ENCODE measurements at regions of chr4 and their contacts with region 1.

Region 1: DNA sequence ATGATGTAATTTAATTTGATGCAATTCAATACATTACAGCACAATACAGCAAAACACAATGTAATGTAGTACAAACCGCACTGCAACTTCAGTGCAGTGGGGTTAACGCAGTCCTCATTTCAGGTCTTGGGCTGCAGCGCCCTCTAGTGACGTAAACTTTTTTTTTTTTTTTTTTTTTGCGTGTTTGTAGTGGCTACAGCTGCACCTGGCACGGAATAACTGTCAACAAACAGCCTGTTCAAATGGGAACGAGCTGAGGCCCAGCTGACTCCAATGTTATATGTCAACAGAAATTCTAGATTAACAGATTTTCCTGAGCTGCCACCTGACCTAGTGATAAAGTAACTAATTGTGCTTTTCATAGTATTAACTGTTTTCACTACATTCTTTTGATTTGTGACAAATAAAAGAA is 33.5 kb upstream of the RASSF6 start:
- DNase-seq: peak; percentile 43
- ATAC-seq: peak; percentile 91
- H3K4me3 ChIP-seq: no peak overlapping the region
- H3K27ac ChIP-seq: no peak overlapping the region
- H3K4me1 ChIP-seq: no peaks in the 10 kb centered on the region
- H3K27me3 ChIP-seq: no peaks in the 10 kb centered on the region
- CTCF ChIP-seq: peak; percentile 45 to 62 (median 45); a peak in 4 of 6 replicates
- EP300 ChIP-seq: peak in 1 of 2 experiments; percentile 58; a peak in 1 of 4 replicates
- POLR2A ChIP-seq: no peak
- RAD21 ChIP-seq: peak; percentile 90

Region 2: DNA sequence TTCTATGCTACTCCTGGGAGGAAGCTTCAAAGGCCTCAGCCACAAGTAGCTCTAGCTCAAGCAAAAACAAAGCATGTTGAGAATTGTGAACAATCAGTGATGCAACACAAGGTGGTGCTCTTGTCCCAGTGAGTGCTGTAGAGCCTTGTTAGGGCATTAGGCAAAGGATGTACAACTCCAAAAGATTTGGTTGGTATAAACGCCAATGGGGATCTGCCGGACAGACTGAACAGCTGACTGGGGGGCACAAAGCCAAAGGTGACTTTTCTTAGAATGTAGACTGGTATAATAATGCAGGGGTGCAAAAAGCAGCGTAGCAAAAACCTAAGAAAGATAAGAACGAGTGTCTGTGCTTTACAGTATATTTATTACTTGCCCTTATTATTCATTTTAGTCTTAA is 312.2 kb before region 1 on chr4:
- CTCF ChIA-PET with region 1: interaction called, 44 read pairs
- POLR2A ChIA-PET with region 1: no interaction called
- RAD21 ChIA-PET with region 1: interaction called, 10 read pairs
- SMC1A ChIA-PET with region 1: interaction called, 31 read pairs
- in situ Hi-C with region 1: loop called (anchors 5 kb)
- intact Hi-C with region 1: loop called (anchors 1 kb)
- DNase-seq: peak; percentile 16
- ATAC-seq: peak; percentile 90
- H3K4me3 ChIP-seq: no peak overlapping the region
- H3K27ac ChIP-seq: no peak overlapping the region
- H3K4me1 ChIP-seq: no peaks in the 10 kb centered on the region
- H3K27me3 ChIP-seq: no peaks in the 10 kb centered on the region
- CTCF ChIP-seq: peak; percentile 44 to 71 (median 57); a peak in 4 of 6 replicates
- EP300 ChIP-seq: no peak
- POLR2A ChIP-seq: no peak
- RAD21 ChIP-seq: peak; percentile 82

Region 3: GRCh38 chr4:73583666-73584065 is 70.0 kb before region 1 on chr4:
- CTCF ChIA-PET with region 1: interaction called, 40 read pairs
- POLR2A ChIA-PET with region 1: interaction called, 4 read pairs
- RAD21 ChIA-PET with region 1: interaction called, 30 read pairs
- SMC1A ChIA-PET with region 1: interaction called, 29 read pairs
- in situ Hi-C with region 1: loop called (anchors 5 kb)
- intact Hi-C with region 1: no loop called
- DNase-seq: no peak
- ATAC-seq: no peak
- H3K4me3 ChIP-seq: no peak overlapping the region
- H3K27ac ChIP-seq: no peak overlapping the region
- H3K4me1 ChIP-seq: peaks cover 2% of the 10 kb centered on the region; the same call in 1 of the 2 replicates
- H3K27me3 ChIP-seq: no peaks in the 10 kb centered on the region
- CTCF ChIP-seq: no peak
- EP300 ChIP-seq: no peak
- POLR2A ChIP-seq: no peak
- RAD21 ChIP-seq: no peak

Region 4: DNA sequence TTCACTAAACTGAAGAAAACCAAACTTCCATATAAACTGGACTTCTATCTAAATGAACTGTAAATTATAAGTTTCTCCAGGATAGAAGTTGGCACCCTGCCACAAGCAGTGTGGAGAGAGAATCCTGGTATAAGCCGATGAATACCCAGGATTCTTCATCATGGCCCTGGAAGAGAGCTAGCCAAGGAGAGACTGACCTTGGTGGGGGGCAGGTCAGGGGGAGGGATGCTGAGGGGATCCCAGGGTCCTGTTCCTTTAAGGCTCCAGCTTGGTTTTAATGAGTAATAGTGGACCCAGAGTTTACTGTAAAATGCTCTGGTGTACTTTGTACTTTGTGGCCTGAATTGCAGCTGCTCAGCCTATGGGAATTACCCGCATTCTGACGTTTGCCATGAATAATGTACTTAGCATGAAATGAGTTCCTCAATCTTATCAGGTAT is 50.4 kb before region 1 on chr4:
- CTCF ChIA-PET with region 1: interaction called, 4 read pairs
- POLR2A ChIA-PET with region 1: interaction called, 5 read pairs
- RAD21 ChIA-PET with region 1: interaction called, 9 read pairs
- SMC1A ChIA-PET with region 1: interaction called, 14 read pairs
- in situ Hi-C with region 1: no loop called
- intact Hi-C with region 1: no loop called
- DNase-seq: no peak
- ATAC-seq: peak; percentile 76
- H3K4me3 ChIP-seq: no peak overlapping the region
- H3K27ac ChIP-seq: no peak overlapping the region
- H3K4me1 ChIP-seq: peaks cover 16% of the 10 kb centered on the region
- H3K27me3 ChIP-seq: no peaks in the 10 kb centered on the region
- CTCF ChIP-seq: no peak
- EP300 ChIP-seq: peak; percentile 89 to 90; a peak in 3 of 4 replicates
- POLR2A ChIP-seq: no peak
- RAD21 ChIP-seq: no peak

Region 5: GRCh38 chr4:74133786-74134499 is 480.2 kb after region 1 on chr4:
- CTCF ChIA-PET with region 1: interaction called, 21 read pairs
- POLR2A ChIA-PET with region 1: no interaction called
- RAD21 ChIA-PET with region 1: interaction called, 13 read pairs
- SMC1A ChIA-PET with region 1: interaction called, 18 read pairs
- in situ Hi-C with region 1: no loop called
- intact Hi-C with region 1: no loop called
- DNase-seq: peak; percentile 20
- ATAC-seq: peak; percentile 89
- H3K4me3 ChIP-seq: no peak overlapping the region
- H3K27ac ChIP-seq: no peak overlapping the region
- H3K4me1 ChIP-seq: no peaks in the 10 kb centered on the region
- H3K27me3 ChIP-seq: peaks cover 0 to 4% of the 10 kb centered on the region in 2 experiments; a peak in 1 of 4 replicates
- CTCF ChIP-seq: peak; percentile 69 to 86 (median 75)
- EP300 ChIP-seq: no peak
- POLR2A ChIP-seq: no peak
- RAD21 ChIP-seq: peak; percentile 86

Region 6: DNA sequence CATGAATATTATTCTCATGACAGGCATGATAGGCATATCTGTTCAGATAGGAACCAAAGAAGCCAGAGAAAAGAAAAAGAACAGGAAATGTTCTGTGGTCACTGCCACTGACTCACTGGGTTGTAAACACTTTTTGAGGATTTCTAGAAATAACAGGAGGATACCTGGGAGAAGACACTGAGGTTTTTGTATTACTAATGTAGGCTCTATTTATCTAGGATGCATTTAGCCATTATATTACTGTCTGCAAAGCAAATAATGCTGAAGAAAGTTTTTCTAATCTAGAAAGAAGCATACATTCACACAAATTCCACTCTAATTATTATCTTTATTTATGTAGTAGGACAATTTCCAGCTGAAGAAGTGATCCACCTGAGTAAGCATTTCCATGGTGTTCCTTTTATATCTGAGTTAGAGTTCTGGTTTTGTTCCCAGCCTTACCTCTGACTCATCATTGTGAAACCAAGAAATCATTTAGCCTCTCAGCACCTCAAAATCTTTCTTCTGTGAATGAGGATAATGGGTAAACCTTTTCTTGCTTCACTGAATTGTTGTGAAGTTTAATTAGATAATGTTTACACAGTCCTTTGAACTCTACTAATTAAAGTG is 614.4 kb after region 1 on chr4:
- CTCF ChIA-PET with region 1: no interaction called
- POLR2A ChIA-PET with region 1: no interaction called
- RAD21 ChIA-PET with region 1: no interaction called
- SMC1A ChIA-PET with region 1: no interaction called
- in situ Hi-C with region 1: no loop called
- intact Hi-C with region 1: no loop called
- DNase-seq: no peak
- ATAC-seq: no peak
- H3K4me3 ChIP-seq: no peak overlapping the region
- H3K27ac ChIP-seq: no peak overlapping the region
- H3K4me1 ChIP-seq: no peaks in the 10 kb centered on the region
- H3K27me3 ChIP-seq: no peaks in the 10 kb centered on the region
- CTCF ChIP-seq: no peak
- EP300 ChIP-seq: no peak
- POLR2A ChIP-seq: no peak
- RAD21 ChIP-seq: no peak